Activated CD4-positive, alpha-beta memory T cell treated with anti-CD3 and anti-CD28 coated beads, Interleukin-2, amount 10 ng/mL, durations not matched to agents 7 days and 5 days (primary cell): ENCODE measurements at regions of chr20 and their contacts with region 1.

Region 1: GRCh38 chr20:3710703-3711483 is 1.5 kb downstream of the SIGLEC1 start:
- DNase-seq: peak; percentile 76
- H3K4me3 Mint-ChIP-seq: no peak overlapping the region
- H3K27ac Mint-ChIP-seq: no peak overlapping the region
- H3K4me1 Mint-ChIP-seq: peaks cover 9% of the 10 kb centered on the region
- H3K27me3 Mint-ChIP-seq: peaks cover 8% of the 10 kb centered on the region

Region 2: DNA sequence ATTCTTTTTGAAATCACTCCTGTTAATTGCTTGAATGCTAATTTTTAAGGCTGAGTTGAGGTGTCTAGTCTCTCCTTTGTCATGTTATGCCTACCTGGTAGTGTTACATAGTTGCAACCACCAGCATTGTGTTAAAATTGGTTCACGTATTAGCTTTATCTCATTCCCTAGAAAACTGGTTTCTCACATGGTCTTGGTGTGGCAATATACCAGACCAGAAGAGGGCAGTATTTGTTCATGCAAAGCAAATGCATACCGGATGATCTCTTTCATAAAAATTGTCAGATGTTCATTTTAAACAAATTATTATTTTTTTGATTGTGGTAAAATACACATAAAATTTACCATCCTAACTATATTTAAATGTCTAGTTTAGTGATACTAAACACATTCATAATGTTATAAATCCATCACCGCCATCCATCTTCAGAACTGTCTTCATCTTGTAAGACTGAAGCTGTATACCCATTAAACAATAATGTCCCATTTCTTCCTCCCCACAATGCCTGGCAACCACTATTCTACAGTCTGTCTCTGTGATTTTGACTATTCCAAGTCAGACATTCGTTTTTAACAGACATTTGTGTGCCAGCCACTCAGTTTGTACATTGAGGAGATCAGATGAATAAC is 147.2 kb before region 1 on chr20:
- CTCF ChIA-PET with region 1: interaction called, 56 read pairs
- POLR2A ChIA-PET with region 1: no interaction called
- DNase-seq: no peak
- H3K4me3 Mint-ChIP-seq: no peak overlapping the region
- H3K27ac Mint-ChIP-seq: no peak overlapping the region
- H3K4me1 Mint-ChIP-seq: no peaks in the 10 kb centered on the region
- H3K27me3 Mint-ChIP-seq: no peaks in the 10 kb centered on the region

Region 3: DNA sequence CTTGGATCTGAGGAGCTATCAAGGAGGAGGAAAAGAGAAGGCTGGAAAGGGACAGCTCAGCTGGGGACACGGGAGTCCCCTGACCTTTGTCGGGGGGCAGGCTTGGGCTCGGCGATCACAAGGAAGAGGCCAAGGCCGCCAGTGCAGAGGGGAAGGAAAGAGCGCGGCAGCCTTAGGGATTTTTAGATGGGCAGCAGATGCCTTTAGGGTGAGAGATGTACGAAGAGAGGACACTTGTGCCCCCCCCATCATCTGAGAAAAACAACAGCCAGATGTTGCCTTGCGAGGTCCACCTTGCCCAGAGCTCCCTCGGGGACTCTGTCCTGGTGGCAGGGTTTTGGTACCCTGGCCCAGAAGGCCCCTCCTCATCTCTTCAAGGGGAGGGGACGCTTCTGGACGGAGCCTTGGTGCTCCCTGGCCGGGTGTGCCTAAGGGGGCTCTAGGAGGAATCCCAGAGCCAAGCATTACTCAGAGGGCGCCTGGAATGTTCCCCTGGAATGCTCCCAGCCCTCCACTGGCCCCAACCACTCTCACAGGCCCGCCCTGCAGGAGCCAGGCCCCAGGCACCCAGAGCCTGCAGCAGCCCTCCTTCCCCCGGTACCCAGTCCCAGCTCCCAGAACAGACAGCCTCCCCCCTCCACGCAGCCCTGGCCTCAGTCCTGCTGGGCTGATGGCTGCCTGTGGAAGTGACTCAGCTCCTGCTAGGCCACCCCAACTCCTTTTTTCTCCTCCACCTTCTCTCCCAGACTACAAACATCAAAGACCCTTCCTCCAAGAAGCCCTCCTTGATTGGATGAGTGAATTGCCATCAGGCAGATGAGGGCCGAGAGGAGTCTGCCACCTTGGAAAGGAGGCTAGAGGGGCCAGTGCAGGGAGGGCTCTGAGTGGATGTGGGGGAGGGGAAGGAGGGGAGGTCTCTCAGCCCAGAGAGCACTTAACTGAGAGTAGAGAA is 30.9 kb before region 1 on chr20:
- CTCF ChIA-PET with region 1: interaction called, 33 read pairs
- POLR2A ChIA-PET with region 1: interaction called, 5 read pairs
- DNase-seq: no peak
- H3K4me3 Mint-ChIP-seq: no peak overlapping the region
- H3K27ac Mint-ChIP-seq: no peak overlapping the region
- H3K4me1 Mint-ChIP-seq: peaks cover 4% of the 10 kb centered on the region
- H3K27me3 Mint-ChIP-seq: peaks cover 70% of the 10 kb centered on the region

Region 4: GRCh38 chr20:3694864-3695263 is 16.0 kb before region 1 on chr20:
- CTCF ChIA-PET with region 1: interaction called, 10 read pairs
- POLR2A ChIA-PET with region 1: no interaction called
- DNase-seq: no peak
- H3K4me3 Mint-ChIP-seq: no peak overlapping the region
- H3K27ac Mint-ChIP-seq: no peak overlapping the region
- H3K4me1 Mint-ChIP-seq: no peaks in the 10 kb centered on the region
- H3K27me3 Mint-ChIP-seq: no peaks in the 10 kb centered on the region